Caco-2 (cell line): ENCODE measurements at regions of chr3 and their contacts with region 1.

Region 1: GRCh38 chr3:169929830-169930519 is 18.6 kb downstream of the SAMD7 start:
- DNase-seq: no peak
- H3K4me3 ChIP-seq: no peak overlapping the region
- H3K4me3 Mint-ChIP-seq: no peak overlapping the region
- H3K27ac Mint-ChIP-seq: no peak overlapping the region
- H3K4me1 ChIP-seq: no peaks in the 10 kb centered on the region
- H3K4me1 Mint-ChIP-seq: no peaks in the 10 kb centered on the region
- H3K27me3 ChIP-seq: no peaks in the 10 kb centered on the region
- H3K27me3 Mint-ChIP-seq: peaks cover 15% of the 10 kb centered on the region
- CTCF ChIP-seq: no peak

Region 2: DNA sequence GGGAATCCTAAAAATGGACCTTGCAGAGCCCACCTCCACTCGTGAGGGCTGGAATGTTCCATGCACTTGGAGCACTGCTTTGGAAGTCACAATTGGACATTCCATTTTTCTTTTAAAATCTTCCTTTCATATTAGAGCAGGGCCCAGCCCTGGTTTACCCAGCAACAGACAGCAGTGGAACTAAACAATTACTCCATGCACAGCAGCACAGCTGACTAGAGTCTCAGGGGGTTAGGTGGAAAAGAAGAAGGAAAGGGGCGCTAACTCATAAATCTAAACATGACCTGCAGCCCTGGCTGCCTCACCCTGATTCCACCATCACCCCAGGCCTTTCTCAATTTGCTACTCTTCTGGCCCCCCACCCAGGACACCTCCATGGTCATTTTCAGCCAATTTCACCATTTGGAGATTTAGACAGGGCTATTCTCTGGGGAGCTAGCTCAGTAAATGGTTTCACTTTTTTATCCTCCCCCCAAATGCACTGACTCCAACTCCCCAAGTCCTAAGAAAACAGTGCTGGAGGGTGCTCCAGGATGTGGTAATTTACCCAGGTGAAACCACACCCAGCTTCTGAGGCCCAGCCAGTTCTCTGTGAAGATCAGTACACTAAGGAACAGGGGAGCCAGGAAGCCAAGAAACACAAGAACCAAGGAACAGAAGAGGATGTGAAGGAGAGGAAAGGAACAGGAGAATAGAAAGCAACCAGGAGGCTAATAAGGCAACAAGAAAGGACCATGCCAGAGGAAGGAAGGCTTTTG is 58.7 kb before region 1 on chr3:
- CTCF ChIA-PET with region 1: no interaction called
- POLR2A ChIA-PET with region 1: no interaction called
- intact Hi-C with region 1: loop called (anchors 10 kb)
- DNase-seq: no peak
- H3K4me3 ChIP-seq: no peak overlapping the region
- H3K4me3 Mint-ChIP-seq: no peak overlapping the region
- H3K27ac Mint-ChIP-seq: no peak overlapping the region
- H3K4me1 ChIP-seq: peaks cover 5% of the 10 kb centered on the region; the same call in 1 of the 2 replicates
- H3K4me1 Mint-ChIP-seq: peaks cover 10% of the 10 kb centered on the region
- H3K27me3 ChIP-seq: no peaks in the 10 kb centered on the region
- H3K27me3 Mint-ChIP-seq: no peaks in the 10 kb centered on the region
- CTCF ChIP-seq: no peak